ENCODE measurements at regions of chr17 and their contacts with region 1.

Region 1: GRCh38 chr17:67475236-67475937 is 98.3 kb downstream of the PITPNC1 start:
- DNase-seq: peak; percentile 78
- H3K4me3 Mint-ChIP-seq: peak overlapping the region; percentile 70
- H3K27ac Mint-ChIP-seq: peak overlapping the region; percentile 92
- H3K4me1 Mint-ChIP-seq: peaks cover 57% of the 10 kb centered on the region
- H3K27me3 Mint-ChIP-seq: no peaks in the 10 kb centered on the region

Region 2: DNA sequence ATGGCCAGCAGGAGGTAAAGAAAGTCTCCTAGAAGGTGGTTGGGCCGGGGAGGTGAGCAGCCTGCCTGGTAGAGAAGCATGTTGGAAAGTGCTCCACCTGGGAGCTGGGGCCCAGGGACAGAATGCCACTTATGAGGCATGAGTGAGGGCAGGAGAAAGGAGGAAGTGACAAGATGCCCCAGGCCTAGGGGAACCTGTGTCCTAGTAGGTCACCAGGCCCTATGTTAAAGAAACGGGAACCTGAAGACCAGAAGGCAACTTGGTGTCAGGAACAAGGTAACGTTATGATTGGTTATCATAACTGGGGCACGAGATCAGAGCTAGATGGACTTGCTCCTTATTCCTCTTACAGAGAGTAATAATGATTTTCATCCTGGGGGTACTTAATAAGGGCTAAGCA is 64.0 kb before region 1 on chr17:
- intact Hi-C with region 1: no loop called
- DNase-seq: no peak
- H3K4me3 Mint-ChIP-seq: no peak overlapping the region
- H3K27ac Mint-ChIP-seq: no peak overlapping the region
- H3K4me1 Mint-ChIP-seq: peaks cover 10% of the 10 kb centered on the region
- H3K27me3 Mint-ChIP-seq: no peaks in the 10 kb centered on the region

Region 3: DNA sequence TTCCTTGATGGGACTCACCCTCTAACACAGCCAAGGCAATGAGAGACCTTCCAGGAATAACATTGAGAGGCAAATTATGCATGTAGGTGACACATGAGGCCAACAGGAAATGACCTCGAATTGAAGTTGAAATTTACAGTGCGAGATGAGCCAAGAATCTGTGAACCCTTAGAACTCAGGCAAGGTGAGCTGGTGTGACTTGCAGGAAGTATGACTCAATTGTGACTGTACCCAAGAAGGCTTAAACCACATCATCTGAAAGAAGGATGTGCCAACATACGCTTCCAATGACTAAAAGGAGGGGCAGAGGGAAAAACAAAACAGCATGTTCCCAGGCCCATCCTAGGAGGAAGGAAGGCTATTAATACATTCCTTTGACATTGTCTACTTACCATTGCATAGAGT is 53.5 kb before region 1 on chr17:
- intact Hi-C with region 1: loop called (anchors 1 kb)
- DNase-seq: peak; percentile 64
- H3K4me3 Mint-ChIP-seq: peak overlapping the region; percentile 48
- H3K27ac Mint-ChIP-seq: peak overlapping the region; percentile 74
- H3K4me1 Mint-ChIP-seq: peaks cover 52% of the 10 kb centered on the region
- H3K27me3 Mint-ChIP-seq: no peaks in the 10 kb centered on the region

Region 4: DNA sequence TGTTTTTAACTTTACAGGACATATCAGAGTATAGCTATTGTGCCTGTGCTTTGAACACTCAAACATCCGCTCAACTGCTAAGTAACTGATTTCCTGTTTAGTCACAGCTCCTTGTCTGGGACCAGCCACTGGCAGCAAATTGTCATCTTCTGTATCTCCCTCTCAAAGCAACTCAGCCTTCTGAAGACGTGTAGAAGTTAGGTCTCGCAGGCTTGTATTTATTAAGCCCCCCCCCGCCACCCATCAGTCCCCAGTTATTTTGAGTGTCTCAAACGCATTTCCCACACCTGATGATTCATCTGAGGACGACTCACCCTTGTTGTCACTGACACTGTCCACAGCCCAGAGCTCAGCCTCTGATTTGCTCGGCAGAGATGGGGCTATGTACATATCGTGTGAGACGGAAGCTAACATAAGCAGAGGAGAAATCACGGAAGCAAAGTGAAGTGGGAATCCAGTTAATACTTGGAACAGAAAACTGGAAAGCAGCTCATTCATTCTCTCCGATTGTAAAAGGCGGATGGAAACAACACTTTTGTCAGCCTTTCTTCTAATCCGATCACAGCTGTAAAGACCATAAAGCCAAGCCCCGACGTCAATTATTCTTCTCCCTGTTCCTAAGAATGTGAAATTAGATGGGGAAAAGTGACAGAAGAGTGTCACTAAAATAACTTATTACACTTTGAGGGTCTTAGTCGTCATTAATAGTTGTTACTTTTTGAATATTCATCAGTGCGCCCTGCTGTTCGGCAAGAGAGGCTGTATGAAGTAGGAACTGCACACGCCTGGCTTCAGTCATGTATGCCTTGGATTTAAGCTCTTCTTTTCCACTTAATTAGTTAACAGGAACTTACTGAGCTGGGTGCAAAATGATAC is 34.1 kb before region 1 on chr17:
- intact Hi-C with region 1: loop called (anchors 1 kb)
- DNase-seq: peak; percentile 65
- H3K4me3 Mint-ChIP-seq: peak overlapping the region; percentile 82
- H3K27ac Mint-ChIP-seq: peak overlapping the region; percentile 98
- H3K4me1 Mint-ChIP-seq: peaks cover 51% of the 10 kb centered on the region
- H3K27me3 Mint-ChIP-seq: no peaks in the 10 kb centered on the region

Region 5: GRCh38 chr17:67509390-67510289 is 34.3 kb after region 1 on chr17:
- intact Hi-C with region 1: no loop called
- DNase-seq: no peak
- H3K4me3 Mint-ChIP-seq: no peak overlapping the region
- H3K27ac Mint-ChIP-seq: no peak overlapping the region
- H3K4me1 Mint-ChIP-seq: peaks cover 15% of the 10 kb centered on the region
- H3K27me3 Mint-ChIP-seq: no peaks in the 10 kb centered on the region

Region 6: GRCh38 chr17:67544364-67544955 is 69.1 kb after region 1 on chr17:
- intact Hi-C with region 1: no loop called
- DNase-seq: no peak
- H3K4me3 Mint-ChIP-seq: no peak overlapping the region
- H3K27ac Mint-ChIP-seq: no peak overlapping the region
- H3K4me1 Mint-ChIP-seq: peaks cover 2% of the 10 kb centered on the region
- H3K27me3 Mint-ChIP-seq: no peaks in the 10 kb centered on the region

Region 7: GRCh38 chr17:67602956-67603355 is 127.6 kb after region 1 on chr17:
- intact Hi-C with region 1: loop called (anchors 5 kb)
- DNase-seq: peak; percentile 16
- H3K4me3 Mint-ChIP-seq: no peak overlapping the region
- H3K27ac Mint-ChIP-seq: no peak overlapping the region
- H3K4me1 Mint-ChIP-seq: no peaks in the 10 kb centered on the region
- H3K27me3 Mint-ChIP-seq: no peaks in the 10 kb centered on the region